Naive thymus-derived CD4-positive, alpha-beta T cell (primary cell): ENCODE measurements at regions of chr7 and their contacts with region 1.

Region 1: DNA sequence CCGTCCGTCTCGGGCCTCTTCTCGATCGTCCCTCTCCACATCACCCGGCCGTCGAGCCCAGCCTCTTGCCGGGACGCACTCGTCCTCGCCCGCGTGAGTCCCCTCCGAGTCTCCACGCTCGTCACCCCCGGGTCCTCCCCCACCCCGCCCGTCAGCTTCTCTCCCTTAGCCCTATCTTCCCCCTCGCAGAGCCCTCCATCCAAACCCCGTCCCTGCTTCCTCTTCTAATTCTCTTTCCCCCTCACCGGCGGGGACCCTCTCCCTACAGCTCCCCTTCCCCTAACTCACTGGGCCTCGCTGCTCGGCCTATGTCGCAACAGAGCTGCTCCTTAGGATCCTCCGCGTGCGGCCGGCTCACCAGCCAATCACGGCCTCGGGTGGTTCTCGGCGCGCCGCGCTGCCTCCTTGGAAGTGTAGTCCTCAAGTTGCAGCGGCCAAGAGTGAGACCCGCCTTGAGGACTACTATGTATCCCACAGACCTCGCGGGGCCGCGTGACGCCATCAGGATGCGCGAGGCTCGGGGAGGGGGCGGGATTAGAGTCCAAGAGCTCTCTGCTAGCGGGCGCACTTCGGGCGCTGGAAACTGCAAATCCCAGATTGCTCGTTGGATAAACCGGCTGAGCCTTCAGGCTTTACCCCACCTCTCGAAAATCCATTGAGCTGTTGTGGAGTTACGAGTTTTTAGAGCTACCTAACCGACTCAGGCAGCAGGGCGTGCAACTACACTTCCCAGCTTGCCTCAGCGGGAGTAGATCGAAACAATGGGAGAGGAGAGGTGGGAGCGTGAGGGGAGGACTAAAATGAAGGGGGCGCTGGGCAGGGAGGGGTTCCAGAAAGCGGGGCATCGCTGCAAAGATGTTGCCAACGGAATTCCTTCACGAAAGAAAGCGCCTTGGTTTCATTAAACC is at the start of gene ABCF2:
- DNase-seq: peak; percentile 91 to 98 (median 97)
- ATAC-seq: peak; percentile 99
- H3K4me3 ChIP-seq: peak within 1 kb of the TSS; percentile 91
- H3K4me3 Mint-ChIP-seq: peak within 1 kb of the TSS; percentile 90 to 99 (median 97)
- H3K27ac ChIP-seq: peak within 1 kb of the TSS; percentile 84
- H3K27ac Mint-ChIP-seq: peak within 1 kb of the TSS; percentile 68 to 97 (median 95)
- H3K4me1 ChIP-seq: peaks cover 16 to 25% of the 10 kb centered on the region in 2 donors
- H3K4me1 Mint-ChIP-seq: peaks cover 31 to 55% (median 47%) of the 10 kb centered on the region in 7 donors
- H3K27me3 ChIP-seq: no peaks in the 10 kb centered on the region
- H3K27me3 Mint-ChIP-seq: peaks cover 0 to 6% (median 0%) of the 10 kb centered on the region in 5 donors
- total RNA-seq, gene ABCF2: 17.2 to 37.8 (median 27.7) TPM

Region 2: GRCh38 chr7:149440222-149440621 is 1786.9 kb before region 1 on chr7:
- CTCF ChIA-PET with region 1: no interaction called
- POLR2A ChIA-PET with region 1: no interaction called
- intact Hi-C with region 1: no loop called
- DNase-seq: no peak
- ATAC-seq: no peak
- H3K4me3 ChIP-seq: no peak overlapping the region
- H3K4me3 Mint-ChIP-seq: no peak overlapping the region
- H3K27ac ChIP-seq: no peak overlapping the region
- H3K27ac Mint-ChIP-seq: peak overlapping the region in 3 of 9 donors; percentile 48 to 51 (median 49)
- H3K4me1 ChIP-seq: peaks cover 0 to 6% of the 10 kb centered on the region in 2 donors
- H3K4me1 Mint-ChIP-seq: peaks cover 2 to 19% (median 14%) of the 10 kb centered on the region in 7 donors
- H3K27me3 ChIP-seq: no peaks in the 10 kb centered on the region
- H3K27me3 Mint-ChIP-seq: no peaks in the 10 kb centered on the region

Region 3: DNA sequence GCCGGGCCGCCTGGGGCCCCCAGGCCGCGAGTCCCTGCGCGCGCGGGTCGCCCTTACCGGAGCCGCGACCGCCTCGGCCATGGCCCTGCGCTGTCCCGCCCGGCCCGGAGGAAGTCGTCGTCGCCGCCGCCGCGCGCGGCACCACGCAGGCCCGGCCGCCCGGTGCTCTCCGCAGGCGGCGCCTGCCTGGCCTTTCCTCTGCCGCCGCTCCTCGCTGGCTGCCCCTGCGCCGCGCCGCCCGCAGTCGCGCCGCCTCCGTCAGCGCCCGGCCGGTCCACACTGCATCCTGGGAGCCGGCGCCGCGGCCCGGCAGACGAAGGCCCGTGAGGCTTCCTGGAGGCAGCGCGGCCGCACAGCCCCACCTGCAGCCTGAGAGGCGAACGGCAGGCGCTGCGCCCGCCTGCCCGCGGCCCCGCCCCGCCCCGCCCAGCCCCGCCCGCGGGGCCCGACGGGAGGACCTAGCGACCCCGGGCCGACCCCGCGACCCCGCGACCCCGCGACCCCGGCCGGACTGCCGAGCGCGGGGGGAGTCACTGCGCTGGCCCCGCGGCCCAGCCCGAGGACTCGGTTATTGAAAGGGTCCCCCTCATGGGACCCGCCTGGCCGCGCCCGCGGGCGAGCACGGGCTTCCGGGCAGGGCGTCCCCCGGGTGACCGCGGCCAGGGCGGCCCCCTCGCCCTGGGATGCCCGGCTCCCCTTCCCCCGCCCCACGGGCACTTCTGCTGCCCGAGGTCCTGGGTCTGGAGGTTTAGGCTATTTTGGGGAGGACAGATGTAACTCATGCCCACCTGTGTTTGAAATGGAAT is 1729.5 kb before region 1 on chr7 and contains the start of gene ZNF746:
- CTCF ChIA-PET with region 1: no interaction called
- POLR2A ChIA-PET with region 1: no interaction called
- intact Hi-C with region 1: loop called in 1 of 2 experiments (anchors 2 kb)
- DNase-seq: peak; percentile 57 to 85 (median 76)
- ATAC-seq: peak; percentile 96
- H3K4me3 ChIP-seq: peak within 1 kb of the TSS; percentile 67
- H3K4me3 Mint-ChIP-seq: peak within 1 kb of the TSS; percentile 92 to 99 (median 96)
- H3K27ac ChIP-seq: peak within 1 kb of the TSS; percentile 82
- H3K27ac Mint-ChIP-seq: peak within 1 kb of the TSS; percentile 84 to 97 (median 95)
- H3K4me1 ChIP-seq: peaks cover 19 to 27% of the 10 kb centered on the region in 2 donors
- H3K4me1 Mint-ChIP-seq: peaks cover 21 to 46% (median 30%) of the 10 kb centered on the region in 7 donors
- H3K27me3 ChIP-seq: no peaks in the 10 kb centered on the region
- H3K27me3 Mint-ChIP-seq: peaks cover 0 to 3% (median 0%) of the 10 kb centered on the region in 5 donors
- total RNA-seq, gene ZNF746: 23.6 to 32.0 (median 24.4) TPM

Region 4: DNA sequence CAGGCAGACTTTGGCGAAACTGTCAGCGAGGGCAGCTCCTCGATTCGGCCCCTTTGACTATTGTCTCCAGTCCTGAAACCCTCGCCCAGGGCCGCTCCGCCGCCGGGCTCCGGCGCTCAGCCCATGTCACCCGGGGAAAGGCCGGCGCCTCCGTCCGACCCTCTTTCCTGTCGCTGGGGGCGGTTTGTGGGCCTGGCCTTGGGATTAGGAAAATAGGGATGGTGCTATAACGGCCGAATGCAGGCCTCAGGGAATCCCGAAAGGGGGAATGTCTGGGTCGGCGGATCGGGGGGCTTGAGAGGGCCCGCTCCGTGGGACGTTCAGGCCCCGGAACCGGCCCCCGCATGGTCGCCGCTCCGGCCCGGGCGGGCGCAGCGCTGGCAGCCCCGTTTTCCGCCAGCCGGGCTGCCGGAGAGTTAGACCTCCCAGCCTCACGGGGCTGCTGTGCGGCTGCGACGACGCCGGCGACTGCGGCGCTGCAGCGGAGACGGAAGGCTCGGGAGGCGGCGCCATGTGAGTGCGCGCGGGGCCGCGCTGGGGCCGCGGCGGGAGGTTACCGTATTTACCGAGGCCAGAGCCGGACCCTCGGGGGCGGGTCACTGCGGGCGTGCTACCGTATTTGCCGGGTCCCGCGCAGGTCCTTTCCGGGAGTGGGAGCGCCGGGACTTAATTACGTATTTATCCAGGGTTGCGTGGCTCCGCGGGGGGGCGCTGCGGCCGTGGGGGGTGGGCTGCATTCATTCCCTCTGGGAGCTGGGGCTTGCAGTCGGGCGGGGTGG is 822.1 kb before region 1 on chr7:
- CTCF ChIA-PET with region 1: no interaction called
- POLR2A ChIA-PET with region 1: no interaction called
- intact Hi-C with region 1: loop called (anchors 5 to 10 kb)
- DNase-seq: peak; percentile 65 to 81 (median 74)
- ATAC-seq: peak; percentile 87
- H3K4me3 ChIP-seq: peak overlapping the region; percentile 83
- H3K4me3 Mint-ChIP-seq: peak overlapping the region; percentile 91 to 100 (median 96)
- H3K27ac ChIP-seq: peak overlapping the region; percentile 91
- H3K27ac Mint-ChIP-seq: peak overlapping the region; percentile 92 to 99 (median 96)
- H3K4me1 ChIP-seq: peaks cover 14 to 21% of the 10 kb centered on the region in 2 donors
- H3K4me1 Mint-ChIP-seq: peaks cover 30 to 42% (median 37%) of the 10 kb centered on the region in 7 donors
- H3K27me3 ChIP-seq: no peaks in the 10 kb centered on the region
- H3K27me3 Mint-ChIP-seq: no peaks in the 10 kb centered on the region

Region 5: GRCh38 chr7:151057989-151058780 is 168.9 kb before region 1 on chr7:
- CTCF ChIA-PET with region 1: no interaction called
- POLR2A ChIA-PET with region 1: no interaction called
- intact Hi-C with region 1: loop called (anchors 1 kb)
- DNase-seq: peak; percentile 80 to 99 (median 97)
- ATAC-seq: peak; percentile 96
- H3K4me3 ChIP-seq: peak overlapping the region; percentile 78
- H3K4me3 Mint-ChIP-seq: peak overlapping the region; percentile 91 to 99 (median 94)
- H3K27ac ChIP-seq: peak overlapping the region; percentile 92
- H3K27ac Mint-ChIP-seq: peak overlapping the region; percentile 86 to 96 (median 93)
- H3K4me1 ChIP-seq: peaks cover 25 to 32% of the 10 kb centered on the region in 2 donors
- H3K4me1 Mint-ChIP-seq: peaks cover 25 to 41% (median 38%) of the 10 kb centered on the region in 7 donors
- H3K27me3 ChIP-seq: no peaks in the 10 kb centered on the region
- H3K27me3 Mint-ChIP-seq: no peaks in the 10 kb centered on the region

Region 6: DNA sequence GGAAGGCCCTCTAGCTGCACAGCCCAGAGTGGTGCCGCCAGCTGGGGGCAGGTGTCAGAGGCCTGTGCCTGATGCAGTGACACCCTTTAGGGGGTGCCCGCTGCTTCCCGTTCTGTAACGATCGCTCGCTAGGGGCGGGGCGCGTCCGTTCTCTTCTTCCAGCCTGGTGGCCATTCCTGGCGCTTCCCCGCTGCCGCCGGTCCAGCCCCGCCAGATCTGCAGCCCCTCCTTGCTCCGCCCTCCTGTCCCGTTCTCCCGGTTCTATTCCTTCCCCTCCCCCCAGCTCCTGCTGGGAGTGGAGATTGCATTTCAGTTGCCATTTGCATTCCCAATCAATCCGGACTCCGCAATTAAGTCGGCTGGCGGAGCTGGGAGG is 101.7 kb before region 1 on chr7:
- CTCF ChIA-PET with region 1: no interaction called
- POLR2A ChIA-PET with region 1: no interaction called
- intact Hi-C with region 1: no loop called
- DNase-seq: no peak
- ATAC-seq: no peak
- H3K4me3 ChIP-seq: no peak overlapping the region
- H3K4me3 Mint-ChIP-seq: peak overlapping the region in 1 of 10 donors; percentile 28
- H3K27ac ChIP-seq: no peak overlapping the region
- H3K27ac Mint-ChIP-seq: no peak overlapping the region
- H3K4me1 ChIP-seq: no peaks in the 10 kb centered on the region
- H3K4me1 Mint-ChIP-seq: peaks cover 0 to 8% (median 6%) of the 10 kb centered on the region in 7 donors
- H3K27me3 ChIP-seq: no peaks in the 10 kb centered on the region
- H3K27me3 Mint-ChIP-seq: no peaks in the 10 kb centered on the region

Region 7: GRCh38 chr7:151172273-151173141 is 54.6 kb before region 1 on chr7:
- CTCF ChIA-PET with region 1: no interaction called
- POLR2A ChIA-PET with region 1: no interaction called
- intact Hi-C with region 1: loop called in 1 of 2 experiments (anchors 1 kb)
- DNase-seq: peak; percentile 59 to 88 (median 78)
- ATAC-seq: peak; percentile 97
- H3K4me3 ChIP-seq: no peak overlapping the region
- H3K4me3 Mint-ChIP-seq: no peak overlapping the region
- H3K27ac ChIP-seq: no peak overlapping the region
- H3K27ac Mint-ChIP-seq: peak overlapping the region in 1 of 9 donors; percentile 41
- H3K4me1 ChIP-seq: peaks cover 0 to 3% of the 10 kb centered on the region in 2 donors
- H3K4me1 Mint-ChIP-seq: peaks cover 5 to 16% (median 12%) of the 10 kb centered on the region in 7 donors
- H3K27me3 ChIP-seq: peaks cover 0 to 7% of the 10 kb centered on the region in 2 donors
- H3K27me3 Mint-ChIP-seq: peaks cover 42 to 62% (median 54%) of the 10 kb centered on the region in 5 donors

Region 8: DNA sequence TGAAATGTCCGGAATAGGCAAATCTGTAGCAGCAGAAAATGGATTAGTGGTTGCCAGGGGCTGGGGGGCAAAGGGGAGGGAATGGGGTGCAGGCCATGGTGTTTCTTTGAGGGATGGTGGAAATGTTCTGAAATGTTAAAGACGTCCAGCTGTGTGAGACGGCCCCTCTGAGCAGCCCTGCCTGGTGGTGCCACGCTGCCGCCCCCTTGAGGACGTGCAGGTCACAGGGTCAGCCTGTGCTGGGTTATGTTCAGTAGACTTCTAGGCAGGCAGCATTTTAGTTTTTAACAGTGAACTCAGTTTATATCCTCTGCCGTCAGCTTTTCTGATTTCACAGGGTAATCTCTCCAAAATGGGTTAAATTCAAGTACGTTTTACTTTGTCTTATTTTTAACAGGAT is 123.9 kb after region 1 on chr7:
- CTCF ChIA-PET with region 1: no interaction called
- POLR2A ChIA-PET with region 1: no interaction called
- intact Hi-C with region 1: loop called (anchors 1 kb)
- DNase-seq: peak in 2 of 9 donors; percentile 7 to 45
- ATAC-seq: no peak
- H3K4me3 ChIP-seq: no peak overlapping the region
- H3K4me3 Mint-ChIP-seq: peak overlapping the region; percentile 56 to 86 (median 72)
- H3K27ac ChIP-seq: peak overlapping the region; percentile 89
- H3K27ac Mint-ChIP-seq: peak overlapping the region; percentile 74 to 100 (median 93)
- H3K4me1 ChIP-seq: peaks cover 28 to 35% of the 10 kb centered on the region in 2 donors
- H3K4me1 Mint-ChIP-seq: peaks cover 19 to 74% (median 69%) of the 10 kb centered on the region in 7 donors
- H3K27me3 ChIP-seq: no peaks in the 10 kb centered on the region
- H3K27me3 Mint-ChIP-seq: no peaks in the 10 kb centered on the region

Region 9: DNA sequence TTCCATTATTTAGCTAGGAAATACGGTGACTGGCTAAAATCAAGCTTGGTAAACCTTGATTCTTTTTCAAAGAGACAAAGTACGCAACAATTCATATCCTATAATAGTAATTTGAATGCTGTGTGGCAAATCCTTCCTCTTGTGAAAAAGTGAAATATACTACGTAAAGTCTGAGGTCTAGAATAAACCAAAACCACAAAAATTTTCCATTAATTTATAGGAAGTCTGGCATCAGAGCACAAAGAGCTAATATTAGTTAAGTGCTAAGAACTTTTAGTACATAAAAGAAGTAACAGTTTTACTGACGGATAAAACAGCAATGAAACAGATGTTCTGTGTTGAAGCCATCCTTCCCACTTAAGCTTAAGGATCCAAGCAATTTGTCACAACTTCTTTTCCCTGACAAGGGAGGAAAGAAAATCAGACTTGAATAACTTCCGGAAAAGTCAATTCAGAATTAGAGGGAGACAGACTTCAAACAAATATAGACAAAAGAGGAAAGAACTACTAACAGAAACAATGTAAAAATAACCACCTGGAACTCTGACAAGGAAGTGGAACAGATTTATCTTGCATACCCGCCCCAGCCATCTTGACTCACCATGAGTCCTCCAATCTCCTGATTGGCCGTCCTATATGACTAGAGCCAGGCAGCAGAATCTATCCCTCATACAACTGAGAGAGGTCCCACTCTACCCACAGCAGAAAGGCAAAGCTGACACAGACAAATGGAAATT is 258.0 kb after region 1 on chr7:
- CTCF ChIA-PET with region 1: no interaction called
- POLR2A ChIA-PET with region 1: no interaction called
- intact Hi-C with region 1: no loop called
- DNase-seq: no peak
- ATAC-seq: peak; percentile 56
- H3K4me3 ChIP-seq: no peak overlapping the region
- H3K4me3 Mint-ChIP-seq: no peak overlapping the region
- H3K27ac ChIP-seq: no peak overlapping the region
- H3K27ac Mint-ChIP-seq: no peak overlapping the region
- H3K4me1 ChIP-seq: no peaks in the 10 kb centered on the region
- H3K4me1 Mint-ChIP-seq: peaks cover 7 to 24% (median 20%) of the 10 kb centered on the region in 7 donors
- H3K27me3 ChIP-seq: no peaks in the 10 kb centered on the region
- H3K27me3 Mint-ChIP-seq: no peaks in the 10 kb centered on the region